Psoas muscle (tissue), 8 donors: ENCODE measurements at regions of chr7 and their contacts with region 1.

Region 1: GRCh38 chr7:123580406-123581161 is 21.0 kb upstream of the ASB15 start:
- DNase-seq: no peak
- ATAC-seq: peak; percentile 76 to 87 (median 78)
- H3K4me3 ChIP-seq: no peak overlapping the region
- H3K27ac ChIP-seq: peak overlapping the region; percentile 37
- H3K4me1 ChIP-seq: peaks cover 5% of the 10 kb centered on the region
- H3K27me3 ChIP-seq: no peaks in the 10 kb centered on the region
- CTCF ChIP-seq: peak; percentile 77

Region 2: DNA sequence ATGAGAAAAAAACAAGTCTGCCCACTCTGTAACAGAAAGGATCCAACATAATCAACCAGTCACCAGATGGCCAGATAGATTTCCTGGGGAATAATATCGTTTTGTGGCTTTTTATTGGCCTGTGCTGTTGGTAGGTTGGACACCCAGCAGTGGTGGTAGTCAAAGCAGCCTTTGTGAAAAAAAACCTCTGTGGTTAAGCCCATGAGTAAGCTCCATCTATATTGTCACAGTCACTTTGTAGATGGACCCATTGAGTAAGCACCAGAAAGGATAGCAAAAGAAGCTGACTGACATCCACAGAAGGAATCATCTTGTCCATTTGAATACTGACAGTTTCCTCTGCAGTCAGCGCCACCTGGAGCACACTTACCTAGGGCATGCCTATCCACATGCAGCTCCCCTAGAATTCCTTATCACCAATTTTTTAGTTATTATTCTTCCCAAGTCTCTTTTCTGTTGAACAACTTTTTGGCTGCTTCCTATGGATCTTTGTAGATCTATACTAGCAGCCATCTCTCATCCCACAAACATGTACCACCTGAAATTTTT is 143.1 kb before region 1 on chr7:
- intact Hi-C with region 1: no loop called
- DNase-seq: no peak
- ATAC-seq: no peak
- H3K4me3 ChIP-seq: no peak overlapping the region
- H3K27ac ChIP-seq: no peak overlapping the region
- H3K4me1 ChIP-seq: no peaks in the 10 kb centered on the region
- H3K27me3 ChIP-seq: no peaks in the 10 kb centered on the region
- CTCF ChIP-seq: no peak

Region 3: DNA sequence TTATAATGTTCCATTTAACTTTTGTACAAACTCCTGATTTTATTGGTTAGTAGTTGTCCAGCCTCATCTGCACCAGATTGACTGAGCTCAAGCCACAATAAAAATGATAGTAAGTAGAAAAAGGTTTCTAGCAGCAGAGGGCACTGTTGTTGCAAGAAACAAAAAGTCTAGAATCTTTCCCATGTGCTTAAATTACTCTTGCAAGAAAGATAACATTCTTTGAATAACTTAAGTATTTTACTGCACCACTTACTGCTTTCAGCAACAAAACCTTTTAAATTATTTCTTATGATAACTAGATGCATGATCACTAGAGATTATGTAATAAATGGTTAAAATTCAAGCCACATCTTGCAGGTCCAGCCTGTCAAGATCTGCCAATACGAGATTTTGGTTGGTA is 102.1 kb after region 1 on chr7:
- intact Hi-C with region 1: loop called in 1 of 2 experiments (anchors 5 kb)
- DNase-seq: no peak
- ATAC-seq: peak in 2 of 4 donors; percentile 42 to 54
- H3K4me3 ChIP-seq: no peak overlapping the region
- H3K27ac ChIP-seq: peak overlapping the region; percentile 81
- H3K4me1 ChIP-seq: peaks cover 47% of the 10 kb centered on the region
- H3K27me3 ChIP-seq: no peaks in the 10 kb centered on the region
- CTCF ChIP-seq: peak; percentile 54

Region 4: GRCh38 chr7:123705211-123705901 is 124.8 kb after region 1 on chr7:
- intact Hi-C with region 1: loop called (anchors 2 to 5 kb)
- DNase-seq: no peak
- ATAC-seq: no peak
- H3K4me3 ChIP-seq: no peak overlapping the region
- H3K27ac ChIP-seq: no peak overlapping the region
- H3K4me1 ChIP-seq: peaks cover 14% of the 10 kb centered on the region
- H3K27me3 ChIP-seq: no peaks in the 10 kb centered on the region
- CTCF ChIP-seq: no peak

Region 5: DNA sequence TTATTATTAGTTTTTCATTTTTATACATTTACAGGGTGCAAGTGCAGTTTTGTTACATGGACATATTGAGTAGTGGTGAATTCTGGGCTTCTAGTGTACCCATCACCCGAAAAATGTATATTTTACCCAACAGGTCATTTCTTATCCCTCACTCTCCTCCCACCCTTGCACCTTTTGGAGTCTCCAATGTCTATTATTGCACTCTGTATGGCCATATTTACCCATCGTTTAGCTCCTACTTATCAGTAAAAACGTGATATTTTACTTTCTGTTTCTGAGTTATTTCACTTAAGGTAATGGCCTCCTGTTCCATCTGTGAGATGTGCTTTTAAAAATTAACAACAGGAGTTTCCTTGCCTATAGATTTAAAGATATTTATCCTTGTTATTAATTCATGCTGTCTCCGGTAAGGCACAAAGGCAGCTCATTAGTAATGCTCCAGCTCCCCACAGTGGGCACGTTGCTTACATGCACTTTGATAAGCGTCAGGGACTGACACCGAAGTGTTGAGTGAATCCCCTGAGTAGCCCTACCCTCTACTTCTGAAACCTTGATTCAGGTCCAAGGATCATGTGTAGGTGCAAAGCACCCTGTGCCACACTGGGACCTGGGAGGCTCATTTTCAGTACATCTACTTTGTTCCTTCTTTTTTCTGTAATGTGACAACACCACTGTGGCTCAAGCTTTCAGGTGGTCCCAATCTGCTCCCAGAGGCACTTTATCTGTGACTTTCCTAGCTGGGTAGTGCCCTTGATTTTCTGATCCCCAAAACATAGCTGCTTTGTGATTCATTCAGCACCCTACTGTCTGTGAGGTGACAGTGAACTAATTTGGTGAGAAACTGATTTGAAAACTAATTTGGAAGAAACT is 291.6 kb after region 1 on chr7:
- intact Hi-C with region 1: loop called in 1 of 2 experiments (anchors 5 kb)
- DNase-seq: peak; percentile 19 to 46
- ATAC-seq: peak; percentile 83 to 97 (median 95)
- H3K4me3 ChIP-seq: no peak overlapping the region
- H3K27ac ChIP-seq: no peak overlapping the region
- H3K4me1 ChIP-seq: peaks cover 3% of the 10 kb centered on the region
- H3K27me3 ChIP-seq: no peaks in the 10 kb centered on the region
- CTCF ChIP-seq: peak; percentile 65